IMR-90 (cell line): ENCODE measurements at regions of chr17 and their contacts with region 1.

Region 1: GRCh38 chr17:2867441-2868424 is 71.5 kb downstream of the RAP1GAP2 start:
- DNase-seq: peak; percentile 93
- ATAC-seq: peak; percentile 64
- H3K4me3 ChIP-seq: no peak overlapping the region
- H3K27ac ChIP-seq: no peak overlapping the region
- H3K4me1 ChIP-seq: peaks cover 12% of the 10 kb centered on the region
- H3K27me3 ChIP-seq: no peaks in the 10 kb centered on the region
- CTCF ChIP-seq: 0 out of 2 replicates have a peak, but pooled peaks have one; percentile 11
- POLR2A ChIP-seq: no peak
- RAD21 ChIP-seq: no peak

Region 2: GRCh38 chr17:2613089-2613808 is 254.5 kb before region 1 on chr17:
- CTCF ChIA-PET with region 1: no interaction called
- POLR2A ChIA-PET with region 1: no interaction called
- dilution Hi-C with region 1: no loop called
- in situ Hi-C with region 1: no loop called
- intact Hi-C with region 1: no loop called
- DNase-seq: no peak
- ATAC-seq: no peak
- H3K4me3 ChIP-seq: no peak overlapping the region
- H3K27ac ChIP-seq: no peak overlapping the region
- H3K4me1 ChIP-seq: peaks cover 5% of the 10 kb centered on the region; the same call in 1 of the 2 replicates
- H3K27me3 ChIP-seq: no peaks in the 10 kb centered on the region
- CTCF ChIP-seq: no peak
- POLR2A ChIP-seq: no peak
- RAD21 ChIP-seq: no peak

Region 3: GRCh38 chr17:3189961-3190360 is 322.2 kb after region 1 on chr17:
- CTCF ChIA-PET with region 1: no interaction called
- POLR2A ChIA-PET with region 1: no interaction called
- dilution Hi-C with region 1: no loop called
- in situ Hi-C with region 1: no loop called
- intact Hi-C with region 1: loop called (anchors 5 kb)
- DNase-seq: no peak
- ATAC-seq: no peak
- H3K4me3 ChIP-seq: no peak overlapping the region
- H3K27ac ChIP-seq: no peak overlapping the region
- H3K4me1 ChIP-seq: no peaks in the 10 kb centered on the region
- H3K27me3 ChIP-seq: no peaks in the 10 kb centered on the region
- CTCF ChIP-seq: no peak
- POLR2A ChIP-seq: no peak
- RAD21 ChIP-seq: no peak